ENCODE measurements at regions of chr16 and their contacts with region 1.

Region 1: DNA sequence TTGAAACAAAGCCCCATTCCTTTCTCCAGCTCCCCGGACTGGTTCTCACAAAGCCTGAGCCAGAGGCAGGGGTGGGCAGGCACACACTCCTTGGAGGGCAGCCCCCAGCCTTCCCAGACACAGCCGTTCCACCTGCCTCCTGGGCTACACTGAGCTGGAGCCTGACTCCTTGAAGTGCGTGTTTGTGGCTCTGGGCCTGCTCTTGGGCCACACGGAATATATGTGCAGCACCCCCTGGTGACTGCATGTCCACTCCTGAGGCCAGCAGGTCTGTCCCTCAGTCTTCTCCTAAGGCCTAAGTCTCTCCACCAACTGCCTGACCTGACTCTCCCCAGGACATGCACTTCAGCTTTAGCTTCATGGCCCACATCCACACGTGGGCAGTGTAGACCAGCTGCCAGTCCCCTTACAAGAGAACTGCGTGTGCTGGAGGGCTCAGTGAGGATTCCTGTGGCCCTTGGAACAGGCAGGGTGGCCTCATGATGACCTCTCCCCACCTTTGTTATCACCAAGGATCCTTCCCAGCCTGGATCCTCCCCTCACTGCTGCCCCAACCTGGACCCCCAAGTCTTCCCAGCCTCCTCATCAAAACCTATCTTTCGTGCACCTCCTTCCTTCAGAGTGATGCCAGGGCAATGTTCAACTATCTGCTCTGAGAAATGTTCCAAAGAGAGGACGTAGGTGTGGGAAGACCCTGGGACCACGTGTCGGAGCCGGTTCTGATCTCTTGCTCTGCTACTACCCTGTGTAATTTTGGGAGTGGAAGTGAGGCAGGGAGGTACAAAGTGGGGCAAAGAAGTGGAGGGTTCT is 12.4 kb upstream of the SLC6A2 start:
- DNase-seq: peak; percentile 59
- ATAC-seq: peak; percentile 98
- H3K4me3 ChIP-seq: no peak overlapping the region
- H3K27ac ChIP-seq: no peak overlapping the region
- H3K4me1 ChIP-seq: peaks cover 39% of the 10 kb centered on the region
- H3K27me3 ChIP-seq: no peaks in the 10 kb centered on the region
- CTCF ChIP-seq: peak; percentile 82
- EP300 ChIP-seq: no peak
- POLR2A ChIP-seq: no peak
- RAD21 ChIP-seq: peak; percentile 79

Region 2: GRCh38 chr16:55508941-55509931 is 134.1 kb before region 1 on chr16 and contains the start of gene LPCAT2:
- CTCF ChIA-PET with region 1: interaction called, 3 read pairs
- POLR2A ChIA-PET with region 1: no interaction called
- in situ Hi-C with region 1: no loop called
- intact Hi-C with region 1: loop called (anchors 2 kb)
- DNase-seq: peak; percentile 76
- ATAC-seq: peak; percentile 91
- H3K4me3 ChIP-seq: peak within 1 kb of the TSS; percentile 69 to 88 (median 76)
- H3K27ac ChIP-seq: no peak within 1 kb of the TSS
- H3K4me1 ChIP-seq: peaks cover 47% of the 10 kb centered on the region
- H3K27me3 ChIP-seq: no peaks in the 10 kb centered on the region
- CTCF ChIP-seq: peak; percentile 11; the same call in 1 of the 2 replicates
- EP300 ChIP-seq: no peak
- POLR2A ChIP-seq: peak; percentile 43 to 82; a peak in 3 of 4 replicates
- RAD21 ChIP-seq: peak; percentile 23; the same call in 1 of the 2 replicates
- total RNA-seq, gene LPCAT2: 7.7 and 9.9 TPM in 2 replicates

Region 3: GRCh38 chr16:55701442-55702319 is 58.3 kb after region 1 on chr16:
- CTCF ChIA-PET with region 1: interaction called, 5 read pairs
- POLR2A ChIA-PET with region 1: no interaction called
- in situ Hi-C with region 1: loop called (anchors 5 kb)
- intact Hi-C with region 1: loop called (anchors 1 kb)
- DNase-seq: peak; percentile 73
- ATAC-seq: peak; percentile 97
- H3K4me3 ChIP-seq: no peak overlapping the region
- H3K27ac ChIP-seq: no peak overlapping the region
- H3K4me1 ChIP-seq: 0 out of 2 replicates have a peak, but pooled peaks cover 6% of the 10 kb centered on the region
- H3K27me3 ChIP-seq: peaks cover 0 to 2% of the 10 kb centered on the region in 2 experiments; a peak in 1 of 5 replicates
- CTCF ChIP-seq: peak; percentile 98
- EP300 ChIP-seq: no peak
- POLR2A ChIP-seq: no peak
- RAD21 ChIP-seq: peak; percentile 90